IMR-90 (cell line): ENCODE measurements at regions of chr4 and their contacts with region 1.

Region 1: GRCh38 chr4:186021461-186022167 is 47.3 kb upstream of the TLR3 start:
- DNase-seq: peak; percentile 20
- ATAC-seq: peak; percentile 86
- H3K4me3 ChIP-seq: no peak overlapping the region
- H3K27ac ChIP-seq: no peak overlapping the region
- H3K4me1 ChIP-seq: no peaks in the 10 kb centered on the region
- H3K27me3 ChIP-seq: peaks cover 26% of the 10 kb centered on the region
- CTCF ChIP-seq: peak; percentile 83
- POLR2A ChIP-seq: no peak
- RAD21 ChIP-seq: peak; percentile 88

Region 2: GRCh38 chr4:185640811-185641675 is 380.6 kb before region 1 on chr4:
- CTCF ChIA-PET with region 1: interaction called, 57 read pairs
- POLR2A ChIA-PET with region 1: no interaction called
- dilution Hi-C with region 1: no loop called
- in situ Hi-C with region 1: no loop called
- intact Hi-C with region 1: loop called (anchors 1 kb)
- DNase-seq: peak; percentile 82
- ATAC-seq: no peak
- H3K4me3 ChIP-seq: no peak overlapping the region
- H3K27ac ChIP-seq: no peak overlapping the region
- H3K4me1 ChIP-seq: peaks cover 3% of the 10 kb centered on the region; the same call in 1 of the 2 replicates
- H3K27me3 ChIP-seq: peaks cover 50% of the 10 kb centered on the region
- CTCF ChIP-seq: peak; percentile 62
- POLR2A ChIP-seq: no peak
- RAD21 ChIP-seq: peak; percentile 54

Region 3: GRCh38 chr4:185656467-185656931 is 365.1 kb before region 1 on chr4:
- CTCF ChIA-PET with region 1: interaction called, 4 read pairs
- POLR2A ChIA-PET with region 1: no interaction called
- dilution Hi-C with region 1: no loop called
- in situ Hi-C with region 1: loop called (anchors 5 kb)
- intact Hi-C with region 1: loop called (anchors 5 kb)
- DNase-seq: peak; percentile 18
- ATAC-seq: peak; percentile 84
- H3K4me3 ChIP-seq: no peak overlapping the region
- H3K27ac ChIP-seq: no peak overlapping the region
- H3K4me1 ChIP-seq: no peaks in the 10 kb centered on the region
- H3K27me3 ChIP-seq: peaks cover 25% of the 10 kb centered on the region
- CTCF ChIP-seq: peak; percentile 23; the same call in 1 of the 2 replicates
- POLR2A ChIP-seq: no peak
- RAD21 ChIP-seq: peak; percentile 33; the same call in 1 of the 2 replicates

Region 4: DNA sequence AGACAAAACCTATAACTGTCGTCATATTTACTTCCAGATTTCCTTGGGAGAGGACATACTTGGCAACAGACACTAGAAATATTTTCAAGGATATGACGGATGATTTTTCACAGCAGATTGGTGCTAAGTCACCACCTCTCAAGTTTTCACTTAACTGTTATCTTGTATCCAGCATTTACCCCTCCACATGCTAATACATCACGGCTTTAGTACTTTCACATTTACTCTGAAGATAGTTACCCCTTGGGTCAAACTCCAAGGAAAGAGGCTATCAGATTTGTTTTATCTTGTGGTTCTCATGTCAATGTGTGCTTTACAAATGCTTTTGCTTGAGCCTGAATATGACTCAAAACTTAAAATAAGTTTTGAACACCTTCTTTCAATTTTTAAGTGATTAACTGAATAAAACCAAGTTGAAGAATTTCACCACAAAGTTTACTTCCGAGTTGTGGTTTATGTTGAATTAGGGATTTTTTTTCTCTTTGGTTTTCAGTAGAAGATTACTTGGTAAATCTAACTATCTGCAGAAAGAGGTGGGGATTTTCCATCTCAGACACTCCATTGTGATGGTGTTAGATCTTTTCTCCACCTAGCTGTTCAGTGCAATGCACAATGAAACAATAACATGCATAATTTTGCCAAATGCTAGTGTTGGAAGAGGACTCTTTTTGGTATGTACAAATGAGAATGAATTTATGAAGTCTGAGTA is 777.5 kb after region 1 on chr4:
- CTCF ChIA-PET with region 1: no interaction called
- POLR2A ChIA-PET with region 1: no interaction called
- dilution Hi-C with region 1: no loop called
- in situ Hi-C with region 1: no loop called
- intact Hi-C with region 1: no loop called
- DNase-seq: no peak
- ATAC-seq: no peak
- H3K4me3 ChIP-seq: no peak overlapping the region
- H3K27ac ChIP-seq: no peak overlapping the region
- H3K4me1 ChIP-seq: peaks cover 2% of the 10 kb centered on the region
- H3K27me3 ChIP-seq: no peaks in the 10 kb centered on the region
- CTCF ChIP-seq: no peak
- POLR2A ChIP-seq: no peak
- RAD21 ChIP-seq: no peak